ENCODE measurements at regions of chr7 and their contacts with region 1.

Region 1: GRCh38 chr7:35701287-35701900 is 6.5 kb upstream of the HERPUD2 start:
- DNase-seq: no peak
- H3K4me3 ChIP-seq: no peak overlapping the region
- H3K27ac ChIP-seq: no peak overlapping the region
- H3K4me1 ChIP-seq: no peaks in the 10 kb centered on the region
- H3K27me3 ChIP-seq: no peaks in the 10 kb centered on the region
- CTCF ChIP-seq: no peak

Region 2: DNA sequence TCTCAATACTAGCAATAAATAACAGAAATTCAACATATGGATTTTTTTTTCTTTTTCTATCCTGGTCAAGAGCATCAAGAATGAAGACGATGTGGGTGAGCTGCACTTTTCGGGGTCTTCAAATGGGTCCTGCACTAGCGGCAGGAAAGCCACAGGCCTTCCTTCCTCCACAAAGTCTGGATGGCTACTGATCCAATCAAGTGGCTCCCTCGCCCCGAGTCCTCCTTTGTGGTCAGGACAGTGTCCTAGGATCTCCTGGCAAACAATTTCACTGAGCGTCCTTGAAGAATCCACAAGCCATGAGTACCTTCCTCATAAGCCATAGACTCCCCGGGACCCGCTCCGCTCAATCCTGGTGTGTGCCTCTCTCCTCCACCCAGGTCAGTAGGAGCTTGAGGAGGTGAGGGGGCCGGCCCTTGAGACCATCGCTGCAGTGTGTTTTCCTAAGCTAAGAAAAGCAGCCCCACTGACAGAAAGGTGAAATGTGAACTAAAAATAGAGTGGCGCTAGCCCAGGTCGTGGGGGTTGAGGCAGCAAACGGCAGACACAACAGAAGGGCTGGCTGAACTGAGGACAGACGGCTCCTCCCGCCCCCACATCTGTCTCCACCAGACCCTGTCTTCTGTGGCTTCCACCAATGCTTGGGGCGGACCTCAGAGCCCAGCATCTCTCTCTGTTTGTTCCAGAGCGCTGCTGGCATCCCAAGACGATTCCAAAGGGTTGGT is 208.8 kb before region 1 on chr7:
- intact Hi-C with region 1: no loop called
- DNase-seq: no peak
- H3K4me3 ChIP-seq: no peak overlapping the region
- H3K27ac ChIP-seq: no peak overlapping the region
- H3K4me1 ChIP-seq: no peaks in the 10 kb centered on the region
- H3K27me3 ChIP-seq: no peaks in the 10 kb centered on the region
- CTCF ChIP-seq: no peak

Region 3: DNA sequence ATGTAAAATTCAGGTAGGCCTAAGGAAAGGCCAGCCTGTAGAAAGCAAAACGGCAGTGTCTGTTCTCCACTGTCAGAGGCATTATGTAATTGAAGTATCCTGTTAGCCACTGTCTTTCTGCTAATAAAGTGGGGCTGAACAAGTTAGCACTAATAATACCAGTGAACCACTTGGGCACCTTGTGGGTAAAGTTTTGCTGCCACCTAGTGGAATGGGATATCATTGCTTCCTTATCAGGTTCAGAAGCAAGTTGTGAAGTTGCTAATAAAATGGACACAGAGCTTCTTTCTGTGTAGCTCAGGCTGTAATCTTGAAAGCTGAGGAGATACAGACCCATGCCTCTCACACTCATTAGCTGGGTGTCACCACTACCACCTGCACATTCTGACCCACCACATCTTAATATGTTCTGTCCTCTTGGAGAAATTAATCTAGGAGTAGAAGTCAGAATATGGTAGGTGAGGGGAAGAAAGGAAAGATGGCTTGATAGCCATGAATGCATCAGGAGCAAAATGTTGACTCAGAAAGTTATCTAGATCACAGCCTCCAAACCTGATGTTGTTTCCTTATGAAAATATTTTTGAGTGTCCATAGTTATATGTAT is 274.6 kb after region 1 on chr7:
- intact Hi-C with region 1: loop called (anchors 10 kb)
- DNase-seq: peak; percentile 66
- H3K4me3 ChIP-seq: no peak overlapping the region
- H3K27ac ChIP-seq: no peak overlapping the region
- H3K4me1 ChIP-seq: no peaks in the 10 kb centered on the region
- H3K27me3 ChIP-seq: no peaks in the 10 kb centered on the region
- CTCF ChIP-seq: peak; percentile 78

Region 4: DNA sequence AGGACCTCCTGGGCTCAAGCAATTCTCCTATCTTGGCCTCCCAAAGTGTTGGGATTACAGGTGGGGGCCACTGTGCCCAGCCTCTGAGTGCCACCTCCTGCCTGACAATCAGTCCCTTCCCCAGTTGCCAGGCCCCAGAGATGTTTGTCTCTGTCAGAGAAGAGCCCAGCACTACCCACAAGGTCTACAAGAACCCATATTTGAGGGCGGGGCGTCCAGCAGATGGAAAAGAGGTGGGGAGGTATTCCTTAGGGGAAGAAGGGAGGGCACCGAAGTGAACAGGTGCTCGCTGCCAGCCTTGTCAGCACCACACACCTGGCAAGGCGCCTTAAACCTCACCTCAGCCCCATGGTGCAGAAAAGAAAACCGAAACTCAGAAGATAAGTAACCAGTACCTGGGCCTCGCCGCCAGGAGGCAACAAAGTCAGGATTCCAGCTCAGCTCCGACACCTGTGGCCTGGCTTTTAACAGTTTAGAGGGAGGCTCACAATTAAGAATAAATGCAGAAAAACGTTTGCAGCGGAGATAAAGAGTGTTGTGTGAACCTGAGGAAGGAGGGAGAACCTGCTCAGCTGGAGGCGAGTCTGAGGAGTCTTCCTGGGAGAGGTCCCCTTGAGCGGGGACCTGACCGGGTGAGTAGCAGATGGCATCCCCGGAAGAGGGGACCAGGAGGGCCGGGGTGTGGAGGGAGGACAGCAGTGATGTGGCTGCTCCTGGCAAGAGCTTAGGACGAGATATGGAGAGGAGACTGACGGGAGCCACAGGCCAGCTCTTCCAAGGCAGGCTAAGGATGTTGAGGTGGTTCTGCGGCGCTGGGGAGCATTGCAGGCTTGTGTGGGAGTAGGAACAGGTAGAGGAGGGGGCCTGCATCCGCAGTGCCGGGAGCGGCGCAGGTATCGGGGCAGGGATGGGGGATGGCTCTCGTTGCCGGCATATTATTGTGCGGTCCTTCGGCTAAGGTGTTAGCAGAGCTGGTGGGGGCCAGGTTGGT is 611.2 kb after region 1 on chr7:
- intact Hi-C with region 1: loop called (anchors 10 kb)
- DNase-seq: peak; percentile 69
- H3K4me3 ChIP-seq: no peak overlapping the region
- H3K27ac ChIP-seq: no peak overlapping the region
- H3K4me1 ChIP-seq: no peaks in the 10 kb centered on the region
- H3K27me3 ChIP-seq: no peaks in the 10 kb centered on the region
- CTCF ChIP-seq: peak; percentile 55